Activated B cell treated with CpG ODN at 0.5 μM for 24 hours (primary cell): ENCODE measurements at regions of chr3 and their contacts with region 1.

Region 1: GRCh38 chr3:31531992-31532586 is 636 bp upstream of the STT3B start:
- DNase-seq: peak; percentile 97
- ATAC-seq: peak; percentile 84
- H3K4me3 Mint-ChIP-seq: peak overlapping the region; percentile 96
- H3K27ac Mint-ChIP-seq: peak overlapping the region; percentile 99
- H3K4me1 Mint-ChIP-seq: peaks cover 31% of the 10 kb centered on the region
- H3K27me3 Mint-ChIP-seq: no peaks in the 10 kb centered on the region
- CTCF ChIP-seq: no peak

Region 2: GRCh38 chr3:30475038-30475808 is 1056.9 kb before region 1 on chr3:
- CTCF ChIA-PET with region 1: no interaction called
- POLR2A ChIA-PET with region 1: no interaction called
- intact Hi-C with region 1: loop called (anchors 10 kb)
- DNase-seq: no peak
- ATAC-seq: peak; percentile 94
- H3K4me3 Mint-ChIP-seq: peak overlapping the region; percentile 54
- H3K27ac Mint-ChIP-seq: peak overlapping the region; percentile 75
- H3K4me1 Mint-ChIP-seq: peaks cover 76% of the 10 kb centered on the region
- H3K27me3 Mint-ChIP-seq: no peaks in the 10 kb centered on the region
- CTCF ChIP-seq: no peak

Region 3: DNA sequence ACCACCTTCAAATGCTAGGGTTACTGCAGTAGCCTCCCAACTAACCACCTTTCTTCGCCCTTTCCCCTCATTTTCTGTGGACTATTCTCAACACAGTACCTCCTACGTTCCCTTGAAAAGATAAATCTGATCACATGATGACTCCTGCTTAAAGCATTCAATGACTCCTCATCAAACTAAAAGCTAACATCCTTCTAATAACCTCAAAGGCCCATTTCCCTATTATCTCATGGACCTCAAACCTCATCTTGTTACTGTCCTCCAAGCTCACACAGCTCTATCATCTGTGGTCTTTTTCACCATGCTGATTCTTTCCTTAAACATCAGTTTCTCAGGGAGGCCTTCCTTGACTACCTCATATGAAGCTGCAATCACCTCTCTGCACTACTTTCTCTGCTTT is 667.3 kb before region 1 on chr3:
- CTCF ChIA-PET with region 1: no interaction called
- POLR2A ChIA-PET with region 1: no interaction called
- intact Hi-C with region 1: no loop called
- DNase-seq: no peak
- ATAC-seq: no peak
- H3K4me3 Mint-ChIP-seq: no peak overlapping the region
- H3K27ac Mint-ChIP-seq: no peak overlapping the region
- H3K4me1 Mint-ChIP-seq: no peaks in the 10 kb centered on the region
- H3K27me3 Mint-ChIP-seq: no peaks in the 10 kb centered on the region
- CTCF ChIP-seq: no peak

Region 4: DNA sequence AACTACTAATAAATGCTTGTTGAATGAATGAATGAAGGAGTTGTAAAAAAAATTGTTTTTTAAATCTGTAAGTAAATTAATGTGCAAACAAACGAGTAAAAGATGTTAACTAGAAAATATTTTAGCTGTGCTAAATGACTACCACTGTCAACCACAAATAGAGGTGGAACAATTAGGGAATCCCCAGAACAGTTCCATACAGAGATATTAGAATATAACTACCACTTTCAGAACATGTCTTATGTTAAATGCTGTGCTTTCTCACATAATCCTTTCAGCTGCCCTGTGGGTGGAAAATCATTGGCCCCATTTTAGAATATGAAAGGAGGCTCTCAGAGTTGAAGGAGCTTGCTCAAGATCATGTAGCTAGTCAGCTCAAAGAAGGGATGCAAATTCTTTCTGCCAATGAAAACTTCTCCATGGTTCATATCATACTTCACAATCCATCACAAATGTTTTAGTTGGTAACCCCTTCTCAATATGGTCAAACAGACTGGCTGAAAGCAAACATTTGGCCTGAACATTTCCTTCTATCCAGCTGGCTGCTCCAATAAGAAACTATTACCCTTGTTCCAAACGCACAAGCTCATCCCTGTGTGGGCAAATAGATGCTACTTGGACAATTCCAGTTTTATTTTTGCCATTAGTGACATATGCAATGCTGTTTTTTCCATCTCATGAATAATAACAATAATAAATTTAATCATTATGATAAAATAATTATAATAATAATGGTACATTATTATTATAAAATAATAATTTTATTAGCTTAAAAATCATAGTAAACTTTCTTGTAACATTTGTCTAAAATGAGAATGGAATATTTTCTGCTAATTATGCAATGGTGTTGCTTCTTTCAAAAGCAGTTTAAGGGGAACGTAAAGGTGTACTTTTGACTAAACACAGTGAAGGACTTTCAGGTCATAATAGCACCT is 289.8 kb before region 1 on chr3:
- CTCF ChIA-PET with region 1: no interaction called
- POLR2A ChIA-PET with region 1: no interaction called
- intact Hi-C with region 1: no loop called
- DNase-seq: no peak
- ATAC-seq: no peak
- H3K4me3 Mint-ChIP-seq: no peak overlapping the region
- H3K27ac Mint-ChIP-seq: no peak overlapping the region
- H3K4me1 Mint-ChIP-seq: no peaks in the 10 kb centered on the region
- H3K27me3 Mint-ChIP-seq: peaks cover 10% of the 10 kb centered on the region
- CTCF ChIP-seq: no peak

Region 5: GRCh38 chr3:31462050-31462569 is 70.0 kb before region 1 on chr3:
- CTCF ChIA-PET with region 1: no interaction called
- POLR2A ChIA-PET with region 1: interaction called, 5 read pairs
- intact Hi-C with region 1: loop called (anchors 2 kb)
- DNase-seq: no peak
- ATAC-seq: peak; percentile 86
- H3K4me3 Mint-ChIP-seq: peak overlapping the region; percentile 44
- H3K27ac Mint-ChIP-seq: peak overlapping the region; percentile 77
- H3K4me1 Mint-ChIP-seq: peaks cover 24% of the 10 kb centered on the region
- H3K27me3 Mint-ChIP-seq: no peaks in the 10 kb centered on the region
- CTCF ChIP-seq: no peak

Region 6: GRCh38 chr3:31777092-31777491 is 245.0 kb after region 1 on chr3:
- CTCF ChIA-PET with region 1: no interaction called
- POLR2A ChIA-PET with region 1: no interaction called
- intact Hi-C with region 1: no loop called
- DNase-seq: no peak
- ATAC-seq: no peak
- H3K4me3 Mint-ChIP-seq: no peak overlapping the region
- H3K27ac Mint-ChIP-seq: peak overlapping the region; percentile 9
- H3K4me1 Mint-ChIP-seq: peaks cover 76% of the 10 kb centered on the region
- H3K27me3 Mint-ChIP-seq: no peaks in the 10 kb centered on the region
- CTCF ChIP-seq: no peak

Region 7: DNA sequence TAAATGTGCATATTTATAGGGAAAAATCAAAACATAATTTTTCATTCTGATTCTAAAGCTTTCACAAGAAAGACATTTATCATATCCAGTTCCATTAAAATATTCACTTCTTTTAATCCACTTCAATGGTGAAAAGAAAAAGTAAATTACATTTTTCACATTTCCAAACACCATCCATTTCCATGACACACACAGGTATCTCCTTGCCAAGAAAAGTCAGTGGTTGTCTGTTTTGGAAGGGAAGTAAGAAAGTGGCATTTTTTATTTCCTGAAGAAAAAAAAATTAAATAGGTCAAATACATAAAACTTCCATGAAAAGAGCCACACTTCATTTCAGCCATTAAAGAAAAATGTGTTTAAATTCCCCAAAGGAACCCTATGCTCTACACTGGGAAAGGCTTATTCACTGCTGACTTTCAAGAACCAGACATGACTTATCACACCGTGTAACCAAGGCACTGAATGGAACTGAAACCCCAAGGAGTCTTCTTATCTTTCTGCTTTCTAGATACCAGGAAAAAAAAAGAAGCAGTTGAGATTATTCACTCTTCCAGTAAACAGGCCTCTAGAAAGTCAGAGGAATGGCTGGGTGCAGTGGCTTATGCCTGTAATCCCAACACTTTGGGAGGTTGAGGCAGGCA is 404.5 kb after region 1 on chr3:
- CTCF ChIA-PET with region 1: no interaction called
- POLR2A ChIA-PET with region 1: no interaction called
- intact Hi-C with region 1: loop called (anchors 5 kb)
- DNase-seq: no peak
- ATAC-seq: peak; percentile 65
- H3K4me3 Mint-ChIP-seq: no peak overlapping the region
- H3K27ac Mint-ChIP-seq: no peak overlapping the region
- H3K4me1 Mint-ChIP-seq: peaks cover 30% of the 10 kb centered on the region
- H3K27me3 Mint-ChIP-seq: no peaks in the 10 kb centered on the region
- CTCF ChIP-seq: no peak

Region 8: DNA sequence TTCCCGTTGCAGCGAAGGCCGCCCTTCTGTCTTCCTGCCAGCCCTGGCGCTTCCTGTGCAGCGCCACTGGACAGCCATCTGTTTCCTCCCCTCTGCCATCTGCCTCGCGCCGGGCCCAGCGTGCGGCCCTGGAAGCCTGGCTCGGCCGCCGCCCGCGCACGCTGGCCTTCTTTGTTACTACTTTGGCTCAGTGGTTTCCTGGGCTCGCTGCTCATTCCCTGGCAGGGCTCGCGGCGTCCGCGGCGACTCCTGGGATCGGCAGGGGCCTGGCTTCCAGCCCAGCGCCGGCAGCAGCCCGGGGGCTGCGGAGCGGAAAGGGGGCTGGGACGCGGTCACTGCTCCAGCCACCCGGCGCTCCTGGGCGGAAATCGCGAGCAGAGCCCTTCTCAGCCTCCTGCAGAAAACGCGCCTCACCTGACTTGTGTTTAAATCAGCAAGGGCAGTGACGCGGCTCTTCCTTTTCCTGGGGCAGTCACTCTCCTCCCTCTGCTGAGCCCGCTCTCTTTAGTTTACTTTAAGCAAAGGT is 869.5 kb after region 1 on chr3:
- CTCF ChIA-PET with region 1: no interaction called
- POLR2A ChIA-PET with region 1: no interaction called
- intact Hi-C with region 1: loop called (anchors 10 kb)
- DNase-seq: peak; percentile 45
- ATAC-seq: peak; percentile 71
- H3K4me3 Mint-ChIP-seq: peak overlapping the region; percentile 89
- H3K27ac Mint-ChIP-seq: peak overlapping the region; percentile 97
- H3K4me1 Mint-ChIP-seq: peaks cover 86% of the 10 kb centered on the region
- H3K27me3 Mint-ChIP-seq: no peaks in the 10 kb centered on the region
- CTCF ChIP-seq: no peak

Region 9: GRCh38 chr3:33096093-33096868 is 1564.2 kb after region 1 on chr3:
- CTCF ChIA-PET with region 1: no interaction called
- POLR2A ChIA-PET with region 1: interaction called, 3 read pairs
- intact Hi-C with region 1: loop called (anchors 5 kb)
- DNase-seq: peak; percentile 58
- ATAC-seq: peak; percentile 68
- H3K4me3 Mint-ChIP-seq: peak overlapping the region; percentile 98
- H3K27ac Mint-ChIP-seq: peak overlapping the region; percentile 94
- H3K4me1 Mint-ChIP-seq: peaks cover 41% of the 10 kb centered on the region
- H3K27me3 Mint-ChIP-seq: no peaks in the 10 kb centered on the region
- CTCF ChIP-seq: no peak